GM18951 (cell line): ENCODE measurements at regions of chr9 and their contacts with region 1.

Region 1: GRCh38 chr9:131334629-131335367 is 45.3 kb downstream of the PLPP7 start:
- POLR2A ChIP-seq: no peak

Region 2: DNA sequence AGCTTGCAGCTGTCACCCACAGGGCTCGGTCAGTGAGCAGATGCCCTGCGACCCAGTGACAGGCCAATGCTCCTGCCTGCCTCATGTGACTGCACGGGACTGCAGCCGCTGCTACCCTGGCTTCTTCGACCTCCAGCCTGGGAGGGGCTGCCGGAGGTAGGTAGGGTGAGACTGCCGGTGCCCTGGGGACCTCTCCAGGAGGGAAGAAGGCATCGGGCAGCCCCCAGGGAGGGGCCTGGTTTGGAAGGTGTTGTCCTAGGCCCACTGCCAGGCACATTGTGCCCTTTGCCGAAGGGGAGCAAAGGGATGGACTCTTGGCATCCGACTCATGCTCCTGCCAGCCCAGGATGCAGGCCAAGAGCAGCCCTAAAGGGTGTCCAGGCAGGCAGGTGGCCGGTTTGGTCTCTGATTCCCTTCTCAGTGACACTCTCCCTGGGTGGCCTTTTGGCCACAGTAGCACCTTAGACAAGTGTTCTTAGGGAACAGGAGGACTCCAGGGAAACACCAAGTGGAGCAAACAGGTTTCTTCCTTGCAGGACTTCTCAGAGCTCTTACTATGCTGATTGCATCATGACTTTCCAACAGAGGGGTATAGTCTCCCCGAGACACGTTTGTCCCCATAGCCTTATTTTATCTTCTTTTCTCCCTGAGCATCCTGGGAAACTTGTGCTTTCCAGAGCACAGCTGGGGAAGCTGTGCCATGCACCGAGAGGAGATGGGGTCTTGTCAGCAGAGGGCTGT is 266.6 kb before region 1 on chr9:
- in situ Hi-C with region 1: loop called (anchors 10 kb)
- POLR2A ChIP-seq: no peak

Region 3: DNA sequence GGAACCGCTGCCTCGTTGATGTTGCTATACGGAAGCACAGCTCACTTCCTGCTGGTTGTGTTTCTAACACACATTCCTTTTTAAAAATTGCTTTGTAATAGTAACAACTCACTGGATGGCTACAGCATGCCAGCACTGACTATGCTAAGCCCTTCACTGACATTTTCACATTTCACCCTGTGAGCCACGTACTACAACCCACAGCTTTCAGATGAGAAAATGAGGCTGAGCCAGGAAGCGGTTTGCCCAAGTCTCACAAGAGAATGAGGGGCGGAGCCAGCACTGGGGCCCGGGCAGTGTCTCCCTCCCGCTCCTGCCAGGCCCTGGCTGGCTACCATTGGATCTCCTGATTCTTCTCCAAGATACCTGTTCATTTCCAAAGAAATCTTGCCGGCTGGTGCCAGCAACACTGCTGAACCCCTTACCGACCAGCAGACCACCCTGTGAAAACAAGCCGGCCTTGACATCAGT is 96.8 kb before region 1 on chr9:
- in situ Hi-C with region 1: no loop called
- POLR2A ChIP-seq: peak; percentile 75